Right ventricle myocardium inferior (tissue), 1 donor: ENCODE measurements at regions of chr9 and their contacts with region 1.

Region 1: GRCh38 chr9:110615498-110615897 is 36.0 kb upstream of the SVEP1 start:
- DNase-seq: no peak
- ATAC-seq: no peak

Region 2: GRCh38 chr9:110266795-110267194 is 348.7 kb before region 1 on chr9:
- intact Hi-C with region 1: no loop called
- DNase-seq: no peak
- ATAC-seq: no peak

Region 3: GRCh38 chr9:110452227-110452801 is 163.2 kb before region 1 on chr9:
- intact Hi-C with region 1: loop called (anchors 5 kb)
- DNase-seq: no peak
- ATAC-seq: no peak